Right cardiac atrium (tissue), 5 donors: ENCODE measurements at regions of chr12 and their contacts with region 1.

Region 1: DNA sequence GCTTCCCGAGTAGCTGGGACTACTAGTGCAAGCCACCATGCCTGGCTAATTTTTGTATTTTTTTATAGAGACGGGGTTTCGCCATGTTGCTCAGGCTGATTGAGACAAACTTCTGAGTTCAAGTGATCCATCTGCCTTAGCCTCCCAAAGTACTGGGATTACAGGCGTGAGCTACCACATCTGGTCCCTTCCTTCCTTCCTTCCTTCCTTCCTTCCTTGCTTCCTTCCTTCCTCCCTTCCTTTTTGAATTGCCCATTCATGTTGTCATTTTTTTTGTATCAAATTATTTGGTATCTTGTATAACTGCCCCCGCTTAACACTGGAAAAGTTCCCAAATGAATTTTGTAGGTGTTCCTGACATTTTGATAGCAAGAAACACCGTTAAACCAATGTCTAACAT is 11.7 kb downstream of the RAD9B start:
- DNase-seq: no peak
- ATAC-seq: no peak
- H3K4me3 ChIP-seq: no peak overlapping the region
- H3K27ac ChIP-seq: no peak overlapping the region
- H3K4me1 ChIP-seq: no peaks in the 10 kb centered on the region
- H3K27me3 ChIP-seq: no peaks in the 10 kb centered on the region

Region 2: GRCh38 chr12:110367181-110367864 is 146.5 kb before region 1 on chr12:
- intact Hi-C with region 1: no loop called
- DNase-seq: peak in 1 of 3 donors; percentile 72
- ATAC-seq: peak; percentile 22 to 26
- H3K4me3 ChIP-seq: no peak overlapping the region
- H3K27ac ChIP-seq: no peak overlapping the region
- H3K4me1 ChIP-seq: no peaks in the 10 kb centered on the region
- H3K27me3 ChIP-seq: no peaks in the 10 kb centered on the region

Region 3: DNA sequence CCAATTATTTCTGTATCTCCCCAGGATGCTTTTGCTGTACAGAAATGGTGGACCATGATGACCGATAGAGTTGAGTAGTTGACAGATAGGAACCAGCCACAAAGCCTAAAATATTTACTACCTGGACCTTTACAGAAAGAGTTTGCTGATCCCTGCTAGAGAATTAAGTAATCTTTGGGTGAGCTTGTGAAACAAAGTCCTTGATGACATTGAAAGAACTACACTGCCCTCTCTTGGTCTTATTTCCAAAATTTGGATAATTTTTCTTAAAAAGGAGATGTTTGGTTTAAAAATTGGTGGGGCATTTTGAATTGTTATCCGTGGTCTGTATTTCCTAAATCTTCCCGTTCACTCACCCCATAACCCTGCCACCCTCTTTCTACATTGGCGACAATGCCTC is 86.4 kb after region 1 on chr12:
- intact Hi-C with region 1: loop called (anchors 2 to 5 kb)
- DNase-seq: no peak
- ATAC-seq: no peak
- H3K4me3 ChIP-seq: no peak overlapping the region
- H3K27ac ChIP-seq: no peak overlapping the region
- H3K4me1 ChIP-seq: peaks cover 2% of the 10 kb centered on the region
- H3K27me3 ChIP-seq: no peaks in the 10 kb centered on the region

Region 4: GRCh38 chr12:110627500-110628195 is 113.8 kb after region 1 on chr12:
- intact Hi-C with region 1: no loop called
- DNase-seq: no peak
- ATAC-seq: no peak
- H3K4me3 ChIP-seq: no peak overlapping the region
- H3K27ac ChIP-seq: no peak overlapping the region
- H3K4me1 ChIP-seq: no peaks in the 10 kb centered on the region
- H3K27me3 ChIP-seq: no peaks in the 10 kb centered on the region

Region 5: DNA sequence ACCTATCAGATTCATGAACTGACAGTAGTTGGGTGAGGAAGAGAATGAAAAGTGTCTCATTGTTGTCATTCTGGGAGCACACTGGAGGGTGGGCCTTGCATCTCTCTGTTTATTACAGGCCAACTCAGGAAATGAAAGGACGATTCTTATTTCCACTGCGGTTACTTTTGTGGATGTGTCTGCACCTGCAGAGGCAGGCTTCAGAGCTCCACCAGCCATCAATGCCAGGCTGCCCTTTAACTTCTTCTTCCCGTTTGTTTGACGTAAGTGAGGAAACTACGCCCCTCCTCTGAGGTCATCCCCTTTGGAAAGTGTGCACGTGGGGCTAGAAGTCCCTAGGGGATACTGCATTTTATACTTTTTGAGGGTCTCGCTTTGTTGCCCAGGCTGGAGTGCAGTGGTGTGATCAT is 133.8 kb after region 1 on chr12:
- intact Hi-C with region 1: no loop called
- DNase-seq: no peak
- ATAC-seq: no peak
- H3K4me3 ChIP-seq: no peak overlapping the region
- H3K27ac ChIP-seq: no peak overlapping the region
- H3K4me1 ChIP-seq: no peaks in the 10 kb centered on the region
- H3K27me3 ChIP-seq: no peaks in the 10 kb centered on the region

Region 6: DNA sequence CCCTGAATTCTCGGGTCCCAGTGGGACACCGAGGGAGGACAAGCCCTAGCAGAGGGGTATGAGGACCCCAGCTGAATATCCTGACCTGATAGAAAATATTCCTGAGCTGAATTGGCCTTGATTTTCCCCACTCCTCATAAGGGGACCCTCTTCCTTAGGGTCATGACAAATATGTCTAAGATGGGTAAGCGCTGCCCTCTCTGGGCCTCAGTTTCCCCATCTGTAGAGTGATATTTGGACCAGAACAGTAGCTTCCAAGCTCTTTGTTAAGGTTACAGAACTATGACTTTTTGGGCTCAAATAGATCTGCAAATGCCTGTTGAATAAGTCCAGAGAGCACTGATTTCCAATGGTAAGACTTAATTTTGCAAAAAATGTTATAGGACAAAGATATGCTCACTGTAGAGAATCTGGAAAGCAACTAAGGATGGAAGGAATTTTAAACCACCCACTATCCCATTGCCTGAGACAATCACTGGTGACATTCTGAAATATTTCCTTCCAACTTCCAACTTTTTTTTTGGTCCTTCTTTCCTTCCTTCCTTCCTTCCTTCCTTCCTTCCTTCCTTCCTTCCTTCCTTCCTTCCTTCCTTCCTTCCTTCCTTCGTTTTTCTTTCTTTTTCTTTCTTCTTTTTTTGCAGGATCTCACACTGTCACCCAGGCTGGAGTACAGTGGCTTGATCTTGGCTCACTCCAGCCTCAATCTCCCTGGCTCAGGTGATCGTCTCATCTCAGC is 374.6 kb after region 1 on chr12:
- intact Hi-C with region 1: loop called in 2 of 4 experiments (anchors 5 kb)
- DNase-seq: no peak
- ATAC-seq: no peak
- H3K4me3 ChIP-seq: no peak overlapping the region
- H3K27ac ChIP-seq: no peak overlapping the region
- H3K4me1 ChIP-seq: no peaks in the 10 kb centered on the region
- H3K27me3 ChIP-seq: no peaks in the 10 kb centered on the region